Thyroid gland (tissue), 4 donors: ENCODE measurements at regions of chr4 and their contacts with region 1.

Region 1: DNA sequence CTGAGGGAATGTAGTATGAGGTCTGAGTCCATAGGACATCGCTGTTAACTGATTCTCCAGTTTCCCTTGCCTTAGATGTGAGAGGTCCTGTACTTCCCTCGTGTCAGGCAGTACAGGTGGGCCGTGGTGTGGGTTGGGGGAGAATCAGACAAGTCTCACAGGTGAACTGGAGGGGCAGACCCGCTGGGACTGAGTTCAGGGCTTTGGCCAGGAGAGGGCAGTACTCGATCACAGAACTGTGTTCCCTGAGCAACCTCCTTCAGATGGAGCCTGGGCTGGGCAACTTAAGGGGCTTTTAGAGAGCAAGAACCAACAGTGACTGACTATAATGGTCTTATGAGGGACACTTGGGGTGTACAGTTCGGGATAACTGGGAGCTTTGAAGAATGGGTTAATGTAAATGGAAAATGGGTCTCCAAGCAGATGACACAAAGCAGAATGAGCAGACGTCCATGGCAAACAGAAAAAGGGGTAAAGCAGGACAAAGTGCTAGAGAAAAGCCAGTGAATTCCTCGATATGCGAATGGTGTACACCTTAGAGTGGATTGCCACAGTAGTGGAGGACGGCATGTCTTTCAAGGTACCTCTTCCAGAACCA is 83.6 kb downstream of the CCNG2 start:
- DNase-seq: peak; percentile 68 to 74
- H3K4me3 ChIP-seq: no peak overlapping the region
- H3K27ac ChIP-seq: no peak overlapping the region
- H3K4me1 ChIP-seq: no peaks in the 10 kb centered on the region
- H3K27me3 ChIP-seq: no peaks in the 10 kb centered on the region
- CTCF ChIP-seq: peak; percentile 44 to 89 (median 76)
- POLR2A ChIP-seq: no peak

Region 2: GRCh38 chr4:76772498-76773106 is 468.0 kb before region 1 on chr4:
- intact Hi-C with region 1: no loop called
- DNase-seq: no peak
- H3K4me3 ChIP-seq: no peak overlapping the region
- H3K27ac ChIP-seq: no peak overlapping the region
- H3K4me1 ChIP-seq: peaks cover 14 to 18% of the 10 kb centered on the region in 2 donors
- H3K27me3 ChIP-seq: no peaks in the 10 kb centered on the region
- CTCF ChIP-seq: no peak
- POLR2A ChIP-seq: no peak

Region 3: GRCh38 chr4:77308843-77309242 is 68.3 kb after region 1 on chr4:
- intact Hi-C with region 1: loop called (anchors 5 kb)
- DNase-seq: no peak
- H3K4me3 ChIP-seq: no peak overlapping the region
- H3K27ac ChIP-seq: no peak overlapping the region
- H3K4me1 ChIP-seq: peaks cover 10 to 29% of the 10 kb centered on the region in 2 donors
- H3K27me3 ChIP-seq: no peaks in the 10 kb centered on the region
- CTCF ChIP-seq: peak in 5 of 6 experiments; percentile 13 to 53 (median 44)
- POLR2A ChIP-seq: no peak

Region 4: GRCh38 chr4:77358315-77358928 is 117.9 kb after region 1 on chr4:
- intact Hi-C with region 1: loop called (anchors 2 kb)
- DNase-seq: peak; percentile 11 to 12
- H3K4me3 ChIP-seq: no peak overlapping the region
- H3K27ac ChIP-seq: no peak overlapping the region
- H3K4me1 ChIP-seq: peaks cover 0 to 7% of the 10 kb centered on the region in 2 donors
- H3K27me3 ChIP-seq: no peaks in the 10 kb centered on the region
- CTCF ChIP-seq: peak; percentile 36 to 68 (median 52)
- POLR2A ChIP-seq: no peak

Region 5: DNA sequence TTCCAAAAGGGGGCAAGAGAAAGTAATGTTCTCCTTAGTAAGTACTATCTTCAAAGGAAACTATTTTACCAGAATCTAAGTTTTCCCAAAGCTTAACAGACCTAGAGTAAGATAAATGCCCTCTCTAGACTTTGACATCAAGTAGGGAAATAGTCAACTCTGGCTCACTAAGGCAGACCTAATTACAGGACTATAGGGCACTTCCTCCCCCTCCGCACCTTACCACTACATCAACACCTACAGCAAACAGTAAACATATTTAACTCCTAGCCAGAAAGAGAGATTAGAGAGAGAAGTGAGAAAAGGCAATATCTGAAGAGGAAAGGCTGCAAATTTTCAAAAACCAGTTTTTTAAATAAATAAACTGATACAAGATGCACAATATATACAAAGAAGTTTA is 518.2 kb after region 1 on chr4:
- intact Hi-C with region 1: no loop called
- DNase-seq: no peak
- H3K4me3 ChIP-seq: no peak overlapping the region
- H3K27ac ChIP-seq: no peak overlapping the region
- H3K4me1 ChIP-seq: no peaks in the 10 kb centered on the region
- H3K27me3 ChIP-seq: no peaks in the 10 kb centered on the region
- CTCF ChIP-seq: no peak
- POLR2A ChIP-seq: no peak